ENCODE measurements at regions of chr7 and their contacts with region 1.

Region 1: DNA sequence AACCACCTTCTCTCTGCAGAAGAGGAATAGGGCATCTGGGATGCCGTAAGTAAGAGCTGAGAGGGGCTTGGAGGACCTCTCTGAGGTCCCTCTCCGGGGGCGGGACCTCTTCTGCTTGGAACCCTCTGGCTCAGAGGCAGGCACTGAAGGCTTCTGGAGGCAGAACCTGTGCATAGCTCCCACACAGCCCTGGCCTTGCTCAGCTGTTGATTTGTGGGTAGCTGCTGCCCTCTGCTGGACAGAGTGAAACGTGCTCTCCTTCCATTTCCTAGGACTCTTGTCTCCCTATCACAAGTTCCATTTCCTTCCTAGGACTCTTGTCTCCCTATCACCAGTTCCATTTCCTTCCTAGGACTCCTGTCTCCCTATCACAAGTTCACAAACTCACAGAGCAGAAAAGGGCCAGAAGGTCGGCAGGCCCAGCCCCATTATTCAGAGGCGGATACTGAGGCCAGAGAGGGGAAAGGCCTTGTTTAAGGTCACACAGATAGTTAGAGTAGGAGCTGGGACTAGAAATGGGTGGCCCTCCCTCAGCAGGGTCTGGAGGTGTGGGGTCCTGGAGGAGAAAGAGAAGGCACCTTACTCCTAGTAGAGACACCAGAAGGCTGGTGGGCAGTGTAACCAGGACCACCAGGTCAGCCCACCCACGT is 30.3 kb upstream of the GARS1 start:
- DNase-seq: peak; percentile 89
- H3K4me3 ChIP-seq: no peak overlapping the region
- H3K27ac ChIP-seq: peak overlapping the region; percentile 50
- H3K4me1 ChIP-seq: peaks cover 38% of the 10 kb centered on the region
- H3K27me3 ChIP-seq: no peaks in the 10 kb centered on the region
- CTCF ChIP-seq: peak; percentile 70 to 88
- POLR2A ChIP-seq: no peak

Region 2: DNA sequence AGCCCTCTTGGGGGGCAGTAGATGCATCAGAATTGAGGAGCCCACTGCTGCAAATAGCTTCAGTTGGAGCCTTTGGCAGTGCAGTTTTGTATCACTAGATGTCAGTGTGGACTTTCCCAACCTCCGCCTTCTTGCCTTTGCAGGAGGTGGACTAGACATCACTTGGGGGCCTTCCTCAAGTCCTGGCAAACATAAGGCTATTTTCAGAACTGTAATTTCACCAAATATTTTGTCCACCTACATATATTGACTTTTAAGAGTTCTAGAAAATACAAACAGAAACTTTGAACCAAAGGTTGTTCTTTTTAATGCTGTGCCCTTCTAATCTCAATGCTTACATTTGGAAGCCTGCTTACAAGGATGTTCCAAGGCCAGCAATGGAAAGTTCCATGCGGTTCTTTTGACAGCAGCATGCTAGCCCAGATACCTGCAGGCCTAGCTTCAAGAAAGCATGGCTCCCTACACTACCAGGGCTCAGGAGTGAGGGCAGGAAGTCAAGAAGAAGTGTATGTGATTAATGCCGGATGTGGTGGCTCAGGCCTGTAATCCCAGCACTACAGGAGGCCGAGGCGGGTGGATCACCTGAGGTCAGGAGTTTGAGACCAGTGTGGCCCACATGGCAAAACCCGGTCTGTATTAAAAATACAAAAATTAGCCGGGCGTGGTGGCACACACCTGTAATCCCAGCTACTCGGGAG is 288.0 kb before region 1 on chr7:
- CTCF ChIA-PET with region 1: interaction called, 74 read pairs
- POLR2A ChIA-PET with region 1: interaction called, 3 read pairs
- dilution Hi-C with region 1: no loop called
- intact Hi-C with region 1: loop called (anchors 1 kb)
- DNase-seq: peak; percentile 69
- H3K4me3 ChIP-seq: no peak overlapping the region
- H3K27ac ChIP-seq: no peak overlapping the region
- H3K4me1 ChIP-seq: no peaks in the 10 kb centered on the region
- H3K27me3 ChIP-seq: peaks cover 0 to 2% of the 10 kb centered on the region in 2 experiments
- CTCF ChIP-seq: peak; percentile 52 to 72
- POLR2A ChIP-seq: no peak

Region 3: DNA sequence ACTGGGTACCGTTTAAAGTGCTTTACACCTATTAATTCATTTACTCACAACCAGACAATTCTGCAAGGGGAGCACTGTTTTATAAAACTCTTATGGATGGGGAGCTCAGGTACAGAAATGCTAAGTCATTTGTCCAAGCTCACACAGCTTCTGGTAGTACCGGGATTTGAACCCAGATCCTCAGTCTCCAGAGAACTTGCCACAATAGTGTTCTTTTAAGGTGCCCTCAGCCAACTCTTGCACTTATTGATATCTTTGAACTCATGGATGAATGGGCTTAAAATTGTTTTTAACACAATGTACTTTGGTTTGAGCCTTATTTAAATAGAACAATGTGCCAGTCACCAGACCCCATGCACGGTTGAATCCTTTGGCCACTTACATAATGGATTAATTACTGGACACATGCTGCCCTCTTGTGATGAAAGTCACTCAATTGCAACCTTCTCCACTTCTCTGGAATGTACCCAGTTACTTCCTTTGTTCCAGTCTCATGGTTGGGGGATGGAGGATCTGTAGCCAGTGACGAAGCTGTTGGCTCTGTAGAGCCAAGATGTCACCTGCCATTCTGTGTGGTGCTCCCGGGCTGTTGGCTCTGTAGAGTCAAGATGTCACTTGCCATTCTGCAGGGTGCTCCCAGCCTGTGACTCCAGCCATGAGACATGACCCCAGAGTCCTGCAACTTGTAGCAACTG is 151.4 kb before region 1 on chr7:
- CTCF ChIA-PET with region 1: interaction called, 13 read pairs
- POLR2A ChIA-PET with region 1: no interaction called
- dilution Hi-C with region 1: no loop called
- intact Hi-C with region 1: loop called (anchors 1 kb)
- DNase-seq: peak; percentile 90
- H3K4me3 ChIP-seq: no peak overlapping the region
- H3K27ac ChIP-seq: no peak overlapping the region
- H3K4me1 ChIP-seq: no peaks in the 10 kb centered on the region
- H3K27me3 ChIP-seq: no peaks in the 10 kb centered on the region
- CTCF ChIP-seq: peak; percentile 57 to 62
- POLR2A ChIP-seq: no peak

Region 4: DNA sequence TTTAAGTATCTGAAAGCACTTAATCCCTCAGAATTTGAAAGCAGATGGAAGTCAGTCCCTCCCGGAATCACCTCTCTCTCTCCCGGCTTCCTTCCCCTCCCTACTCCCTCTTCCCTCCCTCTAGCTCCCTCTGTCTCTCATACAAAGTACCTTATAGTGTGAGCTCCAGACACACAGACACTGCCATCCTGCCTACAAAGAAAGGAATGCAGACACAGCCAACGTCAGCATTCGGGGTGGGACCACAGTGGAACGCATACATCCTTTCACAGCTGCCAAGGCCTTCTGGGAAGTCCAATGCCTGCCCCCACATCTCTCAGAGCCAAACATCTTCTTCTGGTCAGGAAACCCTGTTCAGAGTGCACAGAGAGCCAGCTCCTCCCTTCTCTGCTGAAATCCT is 95.1 kb before region 1 on chr7:
- CTCF ChIA-PET with region 1: interaction called, 14 read pairs
- POLR2A ChIA-PET with region 1: interaction called, 3 read pairs
- dilution Hi-C with region 1: no loop called
- intact Hi-C with region 1: loop called (anchors 1 kb)
- DNase-seq: peak; percentile 99
- H3K4me3 ChIP-seq: no peak overlapping the region
- H3K27ac ChIP-seq: peak overlapping the region; percentile 93
- H3K4me1 ChIP-seq: peaks cover 60% of the 10 kb centered on the region
- H3K27me3 ChIP-seq: no peaks in the 10 kb centered on the region
- CTCF ChIP-seq: peak; percentile 49 to 52
- POLR2A ChIP-seq: peak; percentile 43

Region 5: GRCh38 chr7:30504347-30505173 is 59.8 kb before region 1 on chr7 and contains the start of gene GGCT:
- CTCF ChIA-PET with region 1: interaction called, 116 read pairs
- POLR2A ChIA-PET with region 1: no interaction called
- dilution Hi-C with region 1: no loop called
- intact Hi-C with region 1: loop called (anchors 1 kb)
- DNase-seq: peak; percentile 99
- H3K4me3 ChIP-seq: peak within 1 kb of the TSS; percentile 76 to 83 (median 78)
- H3K27ac ChIP-seq: peak within 1 kb of the TSS; percentile 54
- H3K4me1 ChIP-seq: peaks cover 15% of the 10 kb centered on the region
- H3K27me3 ChIP-seq: no peaks in the 10 kb centered on the region
- CTCF ChIP-seq: no peak
- POLR2A ChIP-seq: peak; percentile 93
- total RNA-seq, gene GGCT: 44.3 and 46.9 TPM in 2 replicates

Region 6: DNA sequence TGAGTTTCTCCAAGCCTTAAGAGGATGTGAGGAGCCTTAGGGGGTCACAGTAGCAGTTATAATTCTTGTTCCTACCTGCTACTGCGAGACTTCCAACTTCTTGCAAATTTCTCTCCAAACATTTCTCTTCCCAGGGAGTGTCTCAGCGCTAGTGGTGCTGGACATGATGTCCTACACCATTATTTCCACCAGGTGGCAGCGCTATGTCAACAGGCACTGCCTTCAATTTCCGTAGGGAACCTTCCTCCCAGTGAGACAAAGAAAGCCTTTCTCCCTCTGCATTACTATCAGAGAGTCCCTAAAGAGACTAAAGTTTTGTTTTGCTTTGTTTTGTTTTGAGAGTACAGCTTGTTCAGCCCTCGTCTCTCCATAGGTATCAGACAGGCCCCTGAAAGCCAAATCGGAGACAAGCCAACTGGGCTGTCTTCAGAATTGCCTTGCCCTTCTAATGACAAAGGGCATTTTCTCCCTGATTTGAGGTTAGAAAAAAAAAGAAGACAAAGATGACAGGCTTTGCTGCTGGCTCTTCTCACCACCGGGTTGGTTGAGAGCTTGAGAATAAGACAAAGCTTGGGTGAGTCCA is 15.5 kb before region 1 on chr7:
- CTCF ChIA-PET with region 1: interaction called, 389 read pairs
- POLR2A ChIA-PET with region 1: interaction called, 9 read pairs
- dilution Hi-C with region 1: no loop called
- intact Hi-C with region 1: loop called (anchors 1 kb)
- DNase-seq: peak; percentile 82
- H3K4me3 ChIP-seq: no peak overlapping the region
- H3K27ac ChIP-seq: peak overlapping the region; percentile 69
- H3K4me1 ChIP-seq: peaks cover 35% of the 10 kb centered on the region
- H3K27me3 ChIP-seq: no peaks in the 10 kb centered on the region
- CTCF ChIP-seq: peak; percentile 76 to 82
- POLR2A ChIP-seq: no peak

Region 7: DNA sequence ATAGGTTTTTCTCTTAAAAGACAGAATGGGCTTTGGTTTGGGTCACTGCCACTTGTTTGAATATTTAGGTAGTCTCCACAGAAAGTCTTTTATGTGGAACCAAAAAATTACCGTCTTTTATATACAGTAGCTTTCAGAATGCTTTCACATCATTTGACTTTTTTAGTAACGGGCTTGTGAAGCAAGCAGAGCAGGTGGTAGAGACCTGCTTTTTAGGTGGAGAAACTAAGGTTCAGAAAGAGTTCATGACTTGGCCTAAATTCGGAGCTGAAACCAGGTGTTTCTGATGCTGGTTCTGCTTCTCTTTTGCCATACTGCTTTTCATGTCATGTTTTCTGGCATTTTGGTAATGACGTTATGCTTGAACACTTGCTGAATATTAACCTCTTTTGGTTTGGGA is 66.6 kb after region 1 on chr7:
- CTCF ChIA-PET with region 1: no interaction called
- POLR2A ChIA-PET with region 1: no interaction called
- dilution Hi-C with region 1: no loop called
- intact Hi-C with region 1: no loop called
- DNase-seq: no peak
- H3K4me3 ChIP-seq: no peak overlapping the region
- H3K27ac ChIP-seq: no peak overlapping the region
- H3K4me1 ChIP-seq: no peaks in the 10 kb centered on the region
- H3K27me3 ChIP-seq: no peaks in the 10 kb centered on the region
- CTCF ChIP-seq: no peak
- POLR2A ChIP-seq: no peak

Measured in endothelial cell of umbilical vein (primary cell).